H1 (cell line): ENCODE measurements at regions of chr14 and their contacts with region 1.

Region 1: DNA sequence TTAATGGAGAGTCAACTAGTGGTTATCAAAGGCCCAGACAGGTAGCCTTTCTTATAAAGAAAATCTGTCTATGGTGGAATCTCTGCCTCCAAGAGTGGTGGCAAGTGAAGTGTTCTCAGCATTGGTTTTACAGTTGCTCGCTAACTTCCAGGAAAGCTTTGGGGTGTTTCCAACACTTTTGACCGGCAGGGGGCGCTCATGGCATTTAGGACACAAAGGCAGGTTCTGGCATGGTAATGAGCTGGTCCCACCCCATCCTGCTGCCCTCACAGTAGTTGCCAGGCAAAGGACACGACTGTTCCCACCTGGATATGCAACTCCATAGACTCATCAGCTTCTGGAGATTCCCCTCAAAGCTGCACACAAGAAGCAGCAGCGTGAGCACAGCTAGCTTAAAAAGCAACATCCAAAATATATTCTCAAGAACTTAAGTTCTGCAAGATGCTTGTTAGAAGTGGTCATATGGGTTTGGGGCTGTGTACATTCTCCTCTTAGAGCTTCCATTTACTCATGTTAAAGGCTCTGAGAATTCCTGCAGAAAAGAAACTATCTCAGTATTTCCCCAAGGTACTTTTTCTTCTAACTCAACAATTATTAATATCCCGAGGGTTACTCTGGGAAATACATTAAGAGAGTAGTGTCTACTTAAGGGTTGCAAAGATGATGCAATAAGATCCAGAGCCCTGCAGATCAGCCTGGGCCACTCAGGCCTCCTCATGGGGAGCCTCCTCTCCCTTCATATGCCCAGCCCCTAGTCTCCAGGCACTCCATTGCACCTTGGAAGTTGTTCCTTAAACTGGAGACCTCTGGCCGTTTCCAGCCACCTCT is 14.8 kb downstream of the PROX2 start:
- DNase-seq: peak; percentile 79 to 98
- H3K4me3 ChIP-seq: no peak overlapping the region
- H3K27ac ChIP-seq: no peak overlapping the region
- H3K4me1 ChIP-seq: 0 out of 7 replicates have a peak, but pooled peaks cover 0 to 2% (median 0%) of the 10 kb centered on the region in 4 experiments
- H3K27me3 ChIP-seq: no peaks in the 10 kb centered on the region
- CTCF ChIP-seq: peak; percentile 81 to 89 (median 88)
- EP300 ChIP-seq: no peak
- POLR2A ChIP-seq: no peak
- RAD21 ChIP-seq: peak; percentile 93 to 95

Region 2: GRCh38 chr14:74595006-74595735 is 265.9 kb before region 1 on chr14:
- CTCF ChIA-PET with region 1: no interaction called
- POLR2A ChIA-PET with region 1: no interaction called
- DNase-seq: no peak
- H3K4me3 ChIP-seq: no peak overlapping the region
- H3K27ac ChIP-seq: no peak overlapping the region
- H3K4me1 ChIP-seq: no peaks in the 10 kb centered on the region; a peak in 1 of 7 replicates
- H3K27me3 ChIP-seq: no peaks in the 10 kb centered on the region
- CTCF ChIP-seq: no peak
- EP300 ChIP-seq: no peak
- POLR2A ChIP-seq: no peak
- RAD21 ChIP-seq: no peak

Region 3: DNA sequence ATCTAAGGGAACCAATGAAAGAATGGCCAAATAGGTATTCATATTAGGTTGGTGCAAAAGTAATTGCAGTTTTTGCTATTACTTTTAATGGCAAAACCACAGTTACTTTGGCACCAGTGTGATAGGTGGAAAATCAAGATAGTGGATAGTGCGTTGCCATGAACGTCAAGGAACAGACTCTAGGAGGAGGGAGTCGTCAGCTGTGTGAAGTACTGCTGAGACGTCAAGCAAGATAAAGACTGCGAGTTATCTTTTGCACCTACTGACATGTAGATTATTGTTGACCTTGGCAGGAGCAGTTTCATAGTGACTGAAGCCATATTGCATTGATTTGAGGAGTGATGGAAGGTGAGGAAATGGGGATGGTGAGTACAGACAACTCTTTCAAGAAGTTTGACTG is 89.7 kb before region 1 on chr14:
- CTCF ChIA-PET with region 1: no interaction called
- POLR2A ChIA-PET with region 1: no interaction called
- DNase-seq: no peak
- H3K4me3 ChIP-seq: no peak overlapping the region
- H3K27ac ChIP-seq: no peak overlapping the region
- H3K4me1 ChIP-seq: no peaks in the 10 kb centered on the region; a peak in 1 of 7 replicates
- H3K27me3 ChIP-seq: no peaks in the 10 kb centered on the region
- CTCF ChIP-seq: no peak
- EP300 ChIP-seq: no peak
- POLR2A ChIP-seq: no peak
- RAD21 ChIP-seq: no peak

Region 4: GRCh38 chr14:74846168-74846567 is 15.0 kb before region 1 on chr14:
- CTCF ChIA-PET with region 1: interaction called, 46 read pairs
- POLR2A ChIA-PET with region 1: interaction called, 4 read pairs
- DNase-seq: no peak
- H3K4me3 ChIP-seq: no peak overlapping the region
- H3K27ac ChIP-seq: no peak overlapping the region
- H3K4me1 ChIP-seq: no peaks in the 10 kb centered on the region
- H3K27me3 ChIP-seq: no peaks in the 10 kb centered on the region
- CTCF ChIP-seq: no peak
- EP300 ChIP-seq: no peak
- POLR2A ChIP-seq: no peak
- RAD21 ChIP-seq: no peak

Region 5: GRCh38 chr14:74881431-74882361 is 20.6 kb after region 1 on chr14 and contains the start of gene DLST:
- CTCF ChIA-PET with region 1: interaction called, 364 read pairs
- POLR2A ChIA-PET with region 1: interaction called, 7 read pairs
- DNase-seq: peak; percentile 63 to 95
- H3K4me3 ChIP-seq: peak within 1 kb of the TSS; percentile 79 to 98 (median 91)
- H3K27ac ChIP-seq: peak within 1 kb of the TSS; percentile 79; the same call in 1 of the 2 replicates
- H3K4me1 ChIP-seq: peaks cover 11 to 26% (median 19%) of the 10 kb centered on the region in 4 experiments
- H3K27me3 ChIP-seq: no peaks in the 10 kb centered on the region
- CTCF ChIP-seq: no peak
- EP300 ChIP-seq: peak in 1 of 2 experiments; percentile 100; a peak in 2 of 3 replicates
- POLR2A ChIP-seq: peak; percentile 57 to 81
- RAD21 ChIP-seq: no peak; a peak in 1 of 4 replicates
- total RNA-seq, gene DLST: 111 and 117 TPM in 2 replicates

Region 6: GRCh38 chr14:74922739-74923401 is 61.8 kb after region 1 on chr14 and contains the start of gene RPS6KL1:
- CTCF ChIA-PET with region 1: interaction called, 15 read pairs
- POLR2A ChIA-PET with region 1: no interaction called
- DNase-seq: peak; percentile 50 to 86
- H3K4me3 ChIP-seq: peak within 1 kb of the TSS; percentile 49 to 78 (median 68)
- H3K27ac ChIP-seq: no peak within 1 kb of the TSS
- H3K4me1 ChIP-seq: no peaks in the 10 kb centered on the region
- H3K27me3 ChIP-seq: 0 out of 7 replicates have a peak, but pooled peaks cover 0 to 2% (median 0%) of the 10 kb centered on the region in 4 experiments
- CTCF ChIP-seq: no peak
- EP300 ChIP-seq: no peak
- POLR2A ChIP-seq: peak in 1 of 2 experiments; percentile 80; a peak in 2 of 3 replicates
- RAD21 ChIP-seq: no peak
- total RNA-seq, gene RPS6KL1: 11.3 and 13.8 TPM in 2 replicates

Region 7: GRCh38 chr14:74932401-74932901 is 71.3 kb after region 1 on chr14:
- CTCF ChIA-PET with region 1: interaction called, 11 read pairs
- POLR2A ChIA-PET with region 1: no interaction called
- DNase-seq: no peak
- H3K4me3 ChIP-seq: no peak overlapping the region
- H3K27ac ChIP-seq: no peak overlapping the region
- H3K4me1 ChIP-seq: peaks cover 0 to 5% (median 0%) of the 10 kb centered on the region in 4 experiments; a peak in 1 of 7 replicates
- H3K27me3 ChIP-seq: no peaks in the 10 kb centered on the region
- CTCF ChIP-seq: no peak
- EP300 ChIP-seq: no peak
- POLR2A ChIP-seq: no peak
- RAD21 ChIP-seq: no peak

Region 8: GRCh38 chr14:74979442-74980361 is 118.6 kb after region 1 on chr14:
- CTCF ChIA-PET with region 1: interaction called, 10 read pairs
- POLR2A ChIA-PET with region 1: no interaction called
- DNase-seq: peak in 1 of 2 experiments; percentile 66
- H3K4me3 ChIP-seq: no peak overlapping the region
- H3K27ac ChIP-seq: no peak overlapping the region
- H3K4me1 ChIP-seq: peaks cover 0 to 28% (median 23%) of the 10 kb centered on the region in 4 experiments; a peak in 6 of 7 replicates
- H3K27me3 ChIP-seq: peaks cover 0 to 2% (median 1%) of the 10 kb centered on the region in 4 experiments; a peak in 1 of 7 replicates
- CTCF ChIP-seq: peak in 2 of 3 experiments; percentile 5 to 44; a peak in 1 of 4 replicates
- EP300 ChIP-seq: no peak
- POLR2A ChIP-seq: no peak
- RAD21 ChIP-seq: peak in 1 of 2 experiments; percentile 21; a peak in 1 of 4 replicates

Region 9: GRCh38 chr14:75022655-75023054 is 161.5 kb after region 1 on chr14:
- CTCF ChIA-PET with region 1: interaction called, 27 read pairs
- POLR2A ChIA-PET with region 1: no interaction called
- DNase-seq: no peak
- H3K4me3 ChIP-seq: no peak overlapping the region
- H3K27ac ChIP-seq: no peak overlapping the region
- H3K4me1 ChIP-seq: no peaks in the 10 kb centered on the region
- H3K27me3 ChIP-seq: no peaks in the 10 kb centered on the region
- CTCF ChIP-seq: peak; percentile 61 to 66 (median 64)
- EP300 ChIP-seq: no peak
- POLR2A ChIP-seq: no peak
- RAD21 ChIP-seq: peak; percentile 63 to 72